ENCODE measurements at regions of chr10 and their contacts with region 1.

Region 1: DNA sequence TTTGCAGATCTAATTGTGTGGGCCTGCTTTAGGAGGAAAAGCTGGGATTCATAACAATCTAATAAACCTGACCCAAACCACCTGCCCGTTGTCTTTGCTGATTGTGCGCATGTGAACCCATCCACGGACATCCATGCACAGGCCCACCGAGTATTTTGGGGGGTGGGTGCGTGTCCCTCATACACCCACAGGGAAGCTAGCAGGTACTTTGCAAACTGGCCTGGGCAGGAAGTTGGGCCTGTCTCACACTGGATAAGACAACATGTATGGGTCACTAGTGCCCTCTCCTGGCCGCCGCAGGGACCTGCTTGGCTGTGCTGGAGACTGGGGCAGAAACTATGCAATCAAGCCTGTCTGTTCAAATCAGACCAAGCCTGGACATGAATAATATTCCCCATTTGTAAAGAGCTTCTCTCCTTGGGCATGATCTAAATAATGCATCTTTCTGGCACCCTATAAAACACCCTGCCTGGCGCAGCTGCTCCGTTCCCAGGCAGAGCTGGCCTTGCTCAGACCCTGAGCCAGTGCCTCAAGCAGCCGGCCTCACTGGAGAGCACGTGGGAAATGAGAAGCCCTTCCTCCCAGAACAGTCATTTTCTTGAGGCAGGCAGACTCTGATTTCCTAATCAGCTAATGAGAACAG is 15.8 kb downstream of the ECHDC3 start:
- DNase-seq: peak; percentile 73 to 89 (median 79)
- ATAC-seq: peak; percentile 99
- H3K4me3 ChIP-seq: no peak overlapping the region
- H3K4me3 Mint-ChIP-seq: no peak overlapping the region
- H3K27ac ChIP-seq: no peak overlapping the region
- H3K27ac Mint-ChIP-seq: no peak overlapping the region
- H3K4me1 ChIP-seq: no peaks in the 10 kb centered on the region
- H3K4me1 Mint-ChIP-seq: peaks cover 6% of the 10 kb centered on the region
- H3K27me3 ChIP-seq: no peaks in the 10 kb centered on the region
- H3K27me3 Mint-ChIP-seq: no peaks in the 10 kb centered on the region
- CTCF ChIP-seq: peak; percentile 92

Region 2: GRCh38 chr10:11515596-11516430 is 242.1 kb before region 1 on chr10:
- CTCF ChIA-PET with region 1: interaction called, 30 read pairs
- POLR2A ChIA-PET with region 1: interaction called, 4 read pairs
- intact Hi-C with region 1: loop called (anchors 1 kb)
- DNase-seq: peak; percentile 11 to 80 (median 28)
- ATAC-seq: peak; percentile 78
- H3K4me3 ChIP-seq: no peak overlapping the region
- H3K4me3 Mint-ChIP-seq: no peak overlapping the region
- H3K27ac ChIP-seq: no peak overlapping the region
- H3K27ac Mint-ChIP-seq: no peak overlapping the region
- H3K4me1 ChIP-seq: no peaks in the 10 kb centered on the region
- H3K4me1 Mint-ChIP-seq: peaks cover 4% of the 10 kb centered on the region
- H3K27me3 ChIP-seq: no peaks in the 10 kb centered on the region
- H3K27me3 Mint-ChIP-seq: no peaks in the 10 kb centered on the region
- CTCF ChIP-seq: peak; percentile 76

Region 3: GRCh38 chr10:11521860-11522259 is 236.1 kb before region 1 on chr10:
- CTCF ChIA-PET with region 1: interaction called, 14 read pairs
- POLR2A ChIA-PET with region 1: no interaction called
- intact Hi-C with region 1: no loop called
- DNase-seq: no peak
- ATAC-seq: no peak
- H3K4me3 ChIP-seq: no peak overlapping the region
- H3K4me3 Mint-ChIP-seq: no peak overlapping the region
- H3K27ac ChIP-seq: no peak overlapping the region
- H3K27ac Mint-ChIP-seq: no peak overlapping the region
- H3K4me1 ChIP-seq: no peaks in the 10 kb centered on the region
- H3K4me1 Mint-ChIP-seq: peaks cover 1% of the 10 kb centered on the region
- H3K27me3 ChIP-seq: no peaks in the 10 kb centered on the region
- H3K27me3 Mint-ChIP-seq: no peaks in the 10 kb centered on the region
- CTCF ChIP-seq: no peak

Region 4: GRCh38 chr10:11724938-11725776 is 32.8 kb before region 1 on chr10:
- CTCF ChIA-PET with region 1: interaction called, 11 read pairs
- POLR2A ChIA-PET with region 1: no interaction called
- intact Hi-C with region 1: no loop called
- DNase-seq: peak in 4 of 14 experiments; percentile 18 to 70 (median 52)
- ATAC-seq: peak; percentile 80
- H3K4me3 ChIP-seq: no peak overlapping the region
- H3K4me3 Mint-ChIP-seq: no peak overlapping the region
- H3K27ac ChIP-seq: no peak overlapping the region
- H3K27ac Mint-ChIP-seq: no peak overlapping the region
- H3K4me1 ChIP-seq: no peaks in the 10 kb centered on the region
- H3K4me1 Mint-ChIP-seq: peaks cover 6% of the 10 kb centered on the region
- H3K27me3 ChIP-seq: no peaks in the 10 kb centered on the region
- H3K27me3 Mint-ChIP-seq: no peaks in the 10 kb centered on the region
- CTCF ChIP-seq: peak; percentile 69

Region 5: DNA sequence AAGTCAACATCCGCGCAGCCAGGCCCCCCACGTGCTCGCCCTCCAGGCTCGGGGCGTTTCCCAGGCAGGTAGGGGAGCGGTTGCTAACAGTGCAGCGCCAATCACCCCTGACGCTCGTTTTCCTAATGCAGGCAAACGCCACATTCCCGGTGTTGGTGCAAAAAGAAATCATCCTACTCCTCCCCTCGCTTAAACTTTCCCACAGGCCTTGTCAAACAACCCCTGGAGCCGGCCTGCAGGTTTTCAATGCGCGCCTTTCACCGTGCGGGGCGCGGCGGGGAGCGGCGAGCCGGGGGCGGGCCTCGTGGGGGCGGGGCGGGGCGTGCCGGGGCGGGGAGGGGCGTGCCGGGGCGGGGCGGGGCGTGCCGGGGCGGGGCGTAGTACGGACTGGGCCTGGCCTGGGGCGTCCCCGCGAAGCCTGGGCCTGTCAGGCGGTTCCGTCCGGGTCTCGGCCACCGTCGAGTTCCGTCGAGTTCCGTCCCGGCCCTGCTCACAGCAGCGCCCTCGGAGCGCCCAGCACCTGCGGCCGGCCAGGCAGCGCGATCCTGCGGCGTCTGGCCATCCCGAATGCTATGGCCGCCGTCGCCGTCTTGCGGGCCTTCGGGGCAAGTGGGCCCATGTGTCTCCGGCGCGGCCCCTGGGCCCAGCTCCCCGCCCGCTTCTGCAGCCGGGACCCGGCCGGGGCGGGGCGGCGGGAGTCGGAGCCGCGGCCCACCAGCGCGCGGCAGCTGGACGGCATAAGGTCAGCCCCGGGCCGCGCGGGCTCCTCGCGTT is 15.8 kb before region 1 on chr10 and contains the start of gene ECHDC3:
- CTCF ChIA-PET with region 1: interaction called, 3 read pairs
- POLR2A ChIA-PET with region 1: no interaction called
- intact Hi-C with region 1: loop called in 1 of 2 experiments (anchors 2 kb)
- DNase-seq: peak in 13 of 14 experiments; percentile 11 to 75 (median 41)
- ATAC-seq: peak; percentile 84
- H3K4me3 ChIP-seq: peak within 1 kb of the TSS; percentile 56
- H3K4me3 Mint-ChIP-seq: peak within 1 kb of the TSS; percentile 67
- H3K27ac ChIP-seq: no peak within 1 kb of the TSS
- H3K27ac Mint-ChIP-seq: peak within 1 kb of the TSS; percentile 22
- H3K4me1 ChIP-seq: peaks cover 18% of the 10 kb centered on the region
- H3K4me1 Mint-ChIP-seq: peaks cover 18% of the 10 kb centered on the region
- H3K27me3 ChIP-seq: peaks cover 0 to 13% of the 10 kb centered on the region in 2 experiments
- H3K27me3 Mint-ChIP-seq: peaks cover 22% of the 10 kb centered on the region
- CTCF ChIP-seq: no peak
- total RNA-seq, gene ECHDC3: 1.5 to 1.6 TPM

Region 6: DNA sequence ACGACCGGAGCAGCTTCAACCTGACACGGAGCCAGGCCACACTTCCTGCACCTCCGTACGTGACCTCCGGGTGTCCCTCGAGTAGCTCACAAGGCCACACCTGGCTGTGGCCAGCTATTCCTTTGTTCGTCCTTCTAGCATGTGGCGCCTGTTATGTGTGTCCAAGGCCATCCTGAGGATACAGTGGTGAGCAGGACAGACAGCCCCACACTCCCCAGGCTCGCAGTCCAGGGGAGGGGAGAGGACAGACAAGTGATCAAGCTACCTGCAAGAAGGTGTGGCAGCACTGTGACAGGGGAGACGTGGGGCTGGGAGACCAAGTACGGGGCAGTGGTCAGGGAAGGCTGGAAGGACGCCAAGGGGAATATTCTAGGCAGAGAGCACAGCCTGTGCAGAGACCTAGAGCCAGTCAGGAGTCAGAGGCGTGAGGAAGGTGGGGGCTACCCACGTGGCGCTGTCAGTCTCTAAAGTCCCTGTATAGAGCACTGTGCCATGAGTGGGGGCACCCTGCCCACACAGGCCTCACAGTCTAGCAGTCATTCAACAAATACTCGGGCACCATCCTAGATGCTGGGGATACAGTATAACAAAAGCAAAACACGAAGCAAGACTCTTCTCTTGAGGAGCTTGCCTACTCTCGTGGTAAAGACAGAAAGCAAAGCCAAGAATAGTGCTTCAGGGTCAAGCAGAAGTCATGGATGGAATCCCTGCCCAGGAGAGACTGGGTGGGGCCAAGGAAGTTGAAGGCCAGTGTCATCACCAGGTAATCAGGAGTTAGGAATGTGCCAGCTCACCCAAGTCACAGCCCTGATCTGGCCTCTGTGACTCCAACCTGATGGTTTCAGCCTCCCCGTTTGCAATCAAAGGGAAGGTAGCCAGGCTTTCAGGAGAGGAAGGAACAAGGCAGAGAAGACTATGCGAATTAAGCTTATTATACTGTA is 123.8 kb after region 1 on chr10:
- CTCF ChIA-PET with region 1: no interaction called
- POLR2A ChIA-PET with region 1: no interaction called
- intact Hi-C with region 1: no loop called
- DNase-seq: no peak
- ATAC-seq: no peak
- H3K4me3 ChIP-seq: no peak overlapping the region
- H3K4me3 Mint-ChIP-seq: no peak overlapping the region
- H3K27ac ChIP-seq: no peak overlapping the region
- H3K27ac Mint-ChIP-seq: no peak overlapping the region
- H3K4me1 ChIP-seq: peaks cover 14% of the 10 kb centered on the region
- H3K4me1 Mint-ChIP-seq: no peaks in the 10 kb centered on the region
- H3K27me3 ChIP-seq: no peaks in the 10 kb centered on the region
- H3K27me3 Mint-ChIP-seq: no peaks in the 10 kb centered on the region
- CTCF ChIP-seq: no peak

Region 7: GRCh38 chr10:12068449-12069269 is 310.7 kb after region 1 on chr10 and contains the start of gene DHTKD1:
- CTCF ChIA-PET with region 1: no interaction called
- POLR2A ChIA-PET with region 1: no interaction called
- intact Hi-C with region 1: no loop called
- DNase-seq: peak; percentile 95 to 99 (median 98)
- ATAC-seq: peak; percentile 98
- H3K4me3 ChIP-seq: peak within 1 kb of the TSS; percentile 85
- H3K4me3 Mint-ChIP-seq: peak within 1 kb of the TSS; percentile 91
- H3K27ac ChIP-seq: peak within 1 kb of the TSS; percentile 73 to 78
- H3K27ac Mint-ChIP-seq: peak within 1 kb of the TSS; percentile 95
- H3K4me1 ChIP-seq: peaks cover 15% of the 10 kb centered on the region
- H3K4me1 Mint-ChIP-seq: peaks cover 16% of the 10 kb centered on the region
- H3K27me3 ChIP-seq: no peaks in the 10 kb centered on the region
- H3K27me3 Mint-ChIP-seq: no peaks in the 10 kb centered on the region
- CTCF ChIP-seq: peak; percentile 27
- total RNA-seq, gene DHTKD1: 5.1 to 5.3 TPM